Mammary epithelial cell (primary cell): ENCODE measurements at regions of chr17 and their contacts with region 1.

Region 1: DNA sequence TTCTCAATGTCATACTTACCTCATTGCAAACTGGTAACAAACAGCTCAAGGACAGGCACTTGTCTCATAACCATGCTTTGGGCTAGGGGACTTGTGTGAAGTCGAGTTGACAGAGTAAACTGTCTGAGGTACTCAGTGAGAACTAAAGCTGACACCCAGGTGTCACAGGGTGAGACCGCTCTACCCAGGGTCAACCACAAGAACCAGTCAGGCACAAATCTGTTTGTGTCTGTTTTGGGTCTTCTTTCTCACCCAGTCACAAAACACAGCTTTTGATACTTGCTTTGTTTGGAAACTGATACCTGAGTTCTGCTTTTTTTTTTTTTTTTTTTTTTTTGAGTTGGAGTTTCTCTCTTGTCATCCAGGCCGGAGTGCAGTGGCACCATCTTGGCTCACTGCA is 161.1 kb downstream of the STX8 start:
- DNase-seq: no peak
- H3K4me3 ChIP-seq: no peak overlapping the region
- H3K27ac ChIP-seq: no peak overlapping the region
- H3K4me1 ChIP-seq: peaks cover 1% of the 10 kb centered on the region
- H3K27me3 ChIP-seq: no peaks in the 10 kb centered on the region
- CTCF ChIP-seq: no peak

Region 2: GRCh38 chr17:9346296-9346926 is 68.1 kb before region 1 on chr17:
- CTCF ChIA-PET with region 1: no interaction called
- dilution Hi-C with region 1: loop called (anchors 5 kb)
- in situ Hi-C with region 1: no loop called
- intact Hi-C with region 1: no loop called
- DNase-seq: no peak
- H3K4me3 ChIP-seq: no peak overlapping the region
- H3K27ac ChIP-seq: no peak overlapping the region
- H3K4me1 ChIP-seq: no peaks in the 10 kb centered on the region
- H3K27me3 ChIP-seq: no peaks in the 10 kb centered on the region
- CTCF ChIP-seq: no peak